ENCODE measurements at regions of chr12 and their contacts with region 1.

Region 1: GRCh38 chr12:4849115-4849541 is 60.6 kb upstream of the KCNA1 start:
- DNase-seq: no peak
- H3K4me3 Mint-ChIP-seq: no peak overlapping the region
- H3K27ac Mint-ChIP-seq: no peak overlapping the region
- H3K4me1 Mint-ChIP-seq: no peaks in the 10 kb centered on the region
- H3K27me3 Mint-ChIP-seq: peaks cover 15% of the 10 kb centered on the region

Region 2: DNA sequence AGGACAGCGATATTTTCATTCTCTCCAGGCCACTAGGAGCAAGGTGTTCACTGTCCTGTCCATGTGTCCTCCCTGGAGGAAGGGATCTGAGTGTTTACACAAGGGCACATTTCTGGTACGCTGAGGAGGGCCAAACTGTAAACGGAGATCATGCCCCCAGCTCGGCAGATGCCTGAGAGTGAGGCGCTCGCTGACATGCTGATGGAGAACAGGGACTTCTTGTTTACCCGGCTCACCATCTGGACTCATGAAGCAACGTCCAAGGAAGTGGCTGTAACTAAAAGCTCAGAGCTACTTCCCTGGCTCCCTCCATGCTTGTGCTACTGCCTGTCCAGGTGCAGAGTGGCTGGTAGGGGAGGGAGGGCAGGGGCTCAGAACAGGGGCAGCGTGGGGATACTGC is 17.2 kb after region 1 on chr12:
- CTCF ChIA-PET with region 1: interaction called, 11 read pairs
- POLR2A ChIA-PET with region 1: no interaction called
- DNase-seq: no peak
- H3K4me3 Mint-ChIP-seq: no peak overlapping the region
- H3K27ac Mint-ChIP-seq: no peak overlapping the region
- H3K4me1 Mint-ChIP-seq: no peaks in the 10 kb centered on the region
- H3K27me3 Mint-ChIP-seq: peaks cover 25% of the 10 kb centered on the region